ENCODE measurements at regions of chr6 and their contacts with region 1.

Region 1: DNA sequence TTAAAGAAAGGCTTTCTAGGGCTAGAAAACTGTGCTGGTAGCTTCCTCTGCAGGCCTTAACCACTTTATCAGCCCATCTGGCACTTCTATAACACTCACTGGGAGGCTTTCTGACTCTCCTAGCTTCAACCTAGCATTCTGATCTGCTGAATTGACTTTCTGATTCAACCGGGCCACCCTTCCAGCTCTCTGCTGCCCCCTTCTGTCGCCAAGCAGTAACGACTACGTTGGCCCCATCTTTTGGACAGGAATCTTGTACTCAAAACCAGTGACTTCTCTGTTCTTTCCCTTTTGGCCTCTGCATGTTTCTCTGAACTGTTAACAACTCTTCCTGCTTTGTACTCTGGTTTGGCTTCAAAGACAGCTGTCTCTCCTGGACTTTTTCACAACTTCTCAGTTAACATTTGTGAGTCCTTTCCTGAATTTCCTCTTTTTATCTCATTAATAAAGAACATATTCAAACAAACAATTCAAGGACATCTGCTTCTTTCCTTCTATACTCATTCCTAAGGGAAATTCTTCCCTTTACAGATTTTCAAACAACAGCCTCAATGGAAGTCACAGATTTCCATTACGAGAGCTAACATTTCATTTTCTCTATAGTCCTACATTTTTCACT is 43.9 kb upstream of the FAM135A start:
- DNase-seq: peak; percentile 89
- H3K4me3 Mint-ChIP-seq: no peak overlapping the region
- H3K27ac Mint-ChIP-seq: no peak overlapping the region
- H3K4me1 Mint-ChIP-seq: no peaks in the 10 kb centered on the region
- H3K27me3 Mint-ChIP-seq: peaks cover 37% of the 10 kb centered on the region

Region 2: GRCh38 chr6:70221025-70221714 is 148.3 kb before region 1 on chr6:
- intact Hi-C with region 1: loop called (anchors 1 kb)
- DNase-seq: no peak
- H3K4me3 Mint-ChIP-seq: no peak overlapping the region
- H3K27ac Mint-ChIP-seq: no peak overlapping the region
- H3K4me1 Mint-ChIP-seq: no peaks in the 10 kb centered on the region
- H3K27me3 Mint-ChIP-seq: peaks cover 9% of the 10 kb centered on the region

Region 3: DNA sequence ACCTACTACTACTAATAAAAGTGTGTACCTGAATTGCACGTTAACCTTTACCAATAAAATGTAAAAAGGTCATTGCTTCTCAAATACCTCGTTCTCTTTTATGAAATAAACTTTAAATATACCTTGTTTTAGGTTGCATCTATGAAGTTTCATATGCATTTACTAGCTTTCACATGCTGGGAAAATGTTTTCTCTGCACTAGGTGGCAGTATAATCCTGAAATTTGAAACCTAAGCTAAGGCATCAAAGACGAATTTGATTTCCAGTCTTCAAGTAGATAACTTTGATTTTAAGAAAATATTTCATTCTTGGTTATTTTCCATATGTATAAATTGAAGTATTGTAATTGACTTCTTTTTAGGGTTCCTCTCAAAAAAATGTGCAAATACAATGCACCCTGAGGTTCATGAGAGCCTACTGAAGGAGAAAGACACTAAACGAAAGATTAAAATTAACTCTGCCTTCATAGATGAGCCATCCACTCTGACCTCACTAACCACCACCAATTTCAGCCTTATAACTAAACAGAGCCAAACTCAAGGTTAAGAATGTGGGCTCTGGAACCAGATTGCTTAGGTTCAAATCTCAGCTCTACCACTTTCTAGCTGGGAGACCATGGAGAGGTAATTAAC is 59.3 kb before region 1 on chr6:
- intact Hi-C with region 1: loop called (anchors 1 kb)
- DNase-seq: peak; percentile 63
- H3K4me3 Mint-ChIP-seq: no peak overlapping the region
- H3K27ac Mint-ChIP-seq: no peak overlapping the region
- H3K4me1 Mint-ChIP-seq: no peaks in the 10 kb centered on the region
- H3K27me3 Mint-ChIP-seq: peaks cover 20% of the 10 kb centered on the region

Region 4: GRCh38 chr6:71012866-71013469 is 643.5 kb after region 1 on chr6:
- intact Hi-C with region 1: loop called (anchors 2 kb)
- DNase-seq: peak; percentile 75
- H3K4me3 Mint-ChIP-seq: no peak overlapping the region
- H3K27ac Mint-ChIP-seq: no peak overlapping the region
- H3K4me1 Mint-ChIP-seq: no peaks in the 10 kb centered on the region
- H3K27me3 Mint-ChIP-seq: peaks cover 10% of the 10 kb centered on the region

Measured in activated CD4-positive, alpha-beta T cell treated with anti-CD3 and anti-CD28 coated beads, Interleukin-2, amount 10 ng/mL, durations not matched to agents 24 days and 14 days (primary cell).